CD4-positive, alpha-beta memory T cell (primary cell): ENCODE measurements at regions of chr12 and their contacts with region 1.

Region 1: GRCh38 chr12:6792522-6793201 is 3.3 kb downstream of the CD4 start:
- DNase-seq: peak; percentile 59 to 73 (median 66)
- H3K4me3 ChIP-seq: peak overlapping the region; percentile 79
- H3K4me3 Mint-ChIP-seq: peak overlapping the region; percentile 95 to 99 (median 98)
- H3K27ac ChIP-seq: peak overlapping the region; percentile 83
- H3K27ac Mint-ChIP-seq: peak overlapping the region; percentile 90 to 99 (median 98)
- H3K4me1 ChIP-seq: peaks cover 55% of the 10 kb centered on the region
- H3K4me1 Mint-ChIP-seq: peaks cover 50 to 92% (median 66%) of the 10 kb centered on the region in 4 donors
- H3K27me3 ChIP-seq: no peaks in the 10 kb centered on the region
- H3K27me3 Mint-ChIP-seq: no peaks in the 10 kb centered on the region

Region 2: DNA sequence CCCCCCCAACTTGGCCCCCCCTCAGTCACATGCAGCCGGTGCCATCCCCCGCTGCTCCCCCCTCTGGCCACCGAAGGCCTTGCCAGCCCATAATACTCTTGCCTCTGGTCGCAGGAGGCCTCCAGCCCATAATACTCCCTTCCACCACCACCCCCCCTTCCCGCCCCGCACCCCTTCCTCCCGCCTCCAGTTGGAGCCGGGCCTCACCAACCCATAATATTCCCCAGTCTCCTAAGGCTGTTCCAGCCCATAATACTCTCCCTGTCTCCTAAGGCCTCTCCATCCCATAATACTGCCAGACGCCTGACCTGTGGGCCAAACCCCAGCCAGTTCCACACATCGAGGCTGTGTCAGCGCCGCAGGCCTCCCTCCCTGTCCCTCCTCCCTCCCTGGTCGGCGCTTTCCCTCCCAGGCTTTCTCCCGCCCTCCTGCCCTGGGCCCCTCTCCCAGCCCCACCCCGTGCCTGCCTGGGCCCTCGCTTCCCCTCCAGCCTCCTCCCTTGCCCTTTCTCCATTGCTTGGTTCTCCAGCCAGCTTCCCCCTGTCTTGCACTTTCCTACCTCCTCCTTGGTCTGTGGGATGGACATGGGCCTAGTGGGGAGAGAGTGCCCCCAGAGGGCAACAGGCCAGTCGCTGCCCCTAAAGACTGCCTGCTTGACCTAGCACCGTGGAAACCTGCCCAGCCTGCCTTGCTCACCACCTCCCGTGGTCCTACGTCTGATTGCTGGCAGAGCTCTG is 178.7 kb before region 1 on chr12:
- CTCF ChIA-PET with region 1: no interaction called
- POLR2A ChIA-PET with region 1: interaction called, 11 read pairs
- intact Hi-C with region 1: no loop called
- DNase-seq: peak in 4 of 5 donors; percentile 42 to 60 (median 53)
- H3K4me3 ChIP-seq: no peak overlapping the region
- H3K4me3 Mint-ChIP-seq: peak overlapping the region in 1 of 8 donors; percentile 67
- H3K27ac ChIP-seq: no peak overlapping the region
- H3K27ac Mint-ChIP-seq: peak overlapping the region; percentile 26 to 93 (median 85)
- H3K4me1 ChIP-seq: peaks cover 31% of the 10 kb centered on the region
- H3K4me1 Mint-ChIP-seq: peaks cover 23 to 50% (median 34%) of the 10 kb centered on the region in 4 donors
- H3K27me3 ChIP-seq: no peaks in the 10 kb centered on the region
- H3K27me3 Mint-ChIP-seq: no peaks in the 10 kb centered on the region

Region 3: GRCh38 chr12:6764011-6764828 is 28.4 kb before region 1 on chr12:
- CTCF ChIA-PET with region 1: interaction called, 343 read pairs
- POLR2A ChIA-PET with region 1: interaction called, 23 read pairs
- intact Hi-C with region 1: loop called (anchors 2 kb)
- DNase-seq: peak; percentile 47 to 79 (median 56)
- H3K4me3 ChIP-seq: no peak overlapping the region
- H3K4me3 Mint-ChIP-seq: peak overlapping the region; percentile 3 to 72 (median 62)
- H3K27ac ChIP-seq: no peak overlapping the region
- H3K27ac Mint-ChIP-seq: peak overlapping the region in 2 of 7 donors; percentile 31 to 46
- H3K4me1 ChIP-seq: peaks cover 27% of the 10 kb centered on the region
- H3K4me1 Mint-ChIP-seq: peaks cover 15 to 40% (median 28%) of the 10 kb centered on the region in 4 donors
- H3K27me3 ChIP-seq: peaks cover 15% of the 10 kb centered on the region
- H3K27me3 Mint-ChIP-seq: peaks cover 16 to 25% of the 10 kb centered on the region in 2 donors

Region 4: GRCh38 chr12:6778574-6779550 is 13.8 kb before region 1 on chr12:
- CTCF ChIA-PET with region 1: interaction called, 20 read pairs
- POLR2A ChIA-PET with region 1: interaction called, 26 read pairs
- intact Hi-C with region 1: no loop called
- DNase-seq: peak; percentile 84 to 90 (median 84)
- H3K4me3 ChIP-seq: peak overlapping the region in 1 of 2 donors; percentile 58
- H3K4me3 Mint-ChIP-seq: peak overlapping the region; percentile 67 to 97 (median 86)
- H3K27ac ChIP-seq: peak overlapping the region; percentile 6
- H3K27ac Mint-ChIP-seq: peak overlapping the region; percentile 49 to 98 (median 90)
- H3K4me1 ChIP-seq: peaks cover 28% of the 10 kb centered on the region
- H3K4me1 Mint-ChIP-seq: peaks cover 22 to 66% (median 45%) of the 10 kb centered on the region in 4 donors
- H3K27me3 ChIP-seq: peaks cover 6% of the 10 kb centered on the region
- H3K27me3 Mint-ChIP-seq: peaks cover 6 to 21% of the 10 kb centered on the region in 2 donors

Region 5: GRCh38 chr12:6914246-6914946 is 121.7 kb after region 1 on chr12 and contains the start of gene ENO2:
- CTCF ChIA-PET with region 1: no interaction called
- POLR2A ChIA-PET with region 1: no interaction called
- intact Hi-C with region 1: no loop called
- DNase-seq: peak; percentile 83 to 93 (median 85)
- H3K4me3 ChIP-seq: peak within 1 kb of the TSS; percentile 69 to 76
- H3K4me3 Mint-ChIP-seq: peak within 1 kb of the TSS; percentile 90 to 98 (median 96)
- H3K27ac ChIP-seq: peak within 1 kb of the TSS; percentile 77
- H3K27ac Mint-ChIP-seq: peak within 1 kb of the TSS; percentile 88 to 98 (median 96)
- H3K4me1 ChIP-seq: peaks cover 29% of the 10 kb centered on the region
- H3K4me1 Mint-ChIP-seq: peaks cover 12 to 44% (median 27%) of the 10 kb centered on the region in 4 donors
- H3K27me3 ChIP-seq: no peaks in the 10 kb centered on the region
- H3K27me3 Mint-ChIP-seq: no peaks in the 10 kb centered on the region
- total RNA-seq, gene ENO2: 187 to 190 TPM

Region 6: DNA sequence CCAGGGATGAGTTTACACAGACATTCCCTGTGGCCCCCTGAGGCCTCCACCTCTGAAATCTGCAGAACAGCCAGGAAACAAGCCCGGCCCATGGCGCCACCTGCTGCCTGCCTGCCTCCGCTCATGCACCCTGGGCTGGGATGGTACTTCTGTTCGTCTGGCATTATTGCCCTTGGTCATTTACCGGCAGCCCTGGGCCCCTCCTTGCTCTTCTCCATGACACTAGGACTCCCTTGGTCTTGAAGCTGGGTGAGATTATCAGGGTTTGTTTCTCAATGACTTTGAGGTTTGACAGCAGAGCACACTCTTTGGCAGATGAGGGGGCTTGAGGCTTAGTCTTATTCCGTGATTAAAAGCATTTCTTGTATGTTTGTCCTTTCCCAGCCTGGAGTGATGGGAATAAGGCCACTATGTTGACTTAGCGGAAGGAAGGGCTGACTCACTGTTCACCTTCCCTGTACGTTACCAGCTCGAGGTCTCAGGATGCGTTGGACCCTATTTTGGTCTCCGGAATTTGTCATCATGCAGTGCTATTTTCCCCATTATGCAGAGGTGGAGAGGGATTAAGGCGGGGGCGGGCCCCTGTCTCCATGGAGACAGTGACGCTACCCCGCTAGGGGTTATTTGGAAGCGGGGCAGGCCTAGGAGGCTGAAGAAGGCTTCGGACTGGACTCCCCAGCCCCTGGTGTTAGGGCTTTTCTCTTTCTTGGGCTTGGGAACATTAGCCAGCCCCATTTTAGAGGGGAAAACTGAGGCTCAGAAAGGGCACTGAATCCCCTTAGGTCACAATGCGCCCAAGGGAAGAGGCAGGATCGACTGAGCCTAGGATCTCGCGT is 396.1 kb after region 1 on chr12:
- CTCF ChIA-PET with region 1: no interaction called
- POLR2A ChIA-PET with region 1: no interaction called
- intact Hi-C with region 1: no loop called
- DNase-seq: peak; percentile 52 to 64 (median 57)
- H3K4me3 ChIP-seq: peak overlapping the region; percentile 82 to 99
- H3K4me3 Mint-ChIP-seq: peak overlapping the region; percentile 95 to 100 (median 98)
- H3K27ac ChIP-seq: peak overlapping the region; percentile 94
- H3K27ac Mint-ChIP-seq: peak overlapping the region; percentile 96 to 99 (median 99)
- H3K4me1 ChIP-seq: peaks cover 39% of the 10 kb centered on the region
- H3K4me1 Mint-ChIP-seq: peaks cover 23 to 55% (median 37%) of the 10 kb centered on the region in 4 donors
- H3K27me3 ChIP-seq: no peaks in the 10 kb centered on the region
- H3K27me3 Mint-ChIP-seq: no peaks in the 10 kb centered on the region